Sciatic nerve (tissue), 2 donors: ENCODE measurements at regions of chr7 and their contacts with region 1.

Region 1: GRCh38 chr7:76020031-76020714 is 25.8 kb upstream of the TMEM120A start:
- DNase-seq: peak; percentile 87
- ATAC-seq: peak; percentile 71

Region 2: GRCh38 chr7:75866489-75867389 is 153.4 kb before region 1 on chr7:
- intact Hi-C with region 1: loop called (anchors 5 kb)
- DNase-seq: peak; percentile 69
- ATAC-seq: peak; percentile 92

Region 3: DNA sequence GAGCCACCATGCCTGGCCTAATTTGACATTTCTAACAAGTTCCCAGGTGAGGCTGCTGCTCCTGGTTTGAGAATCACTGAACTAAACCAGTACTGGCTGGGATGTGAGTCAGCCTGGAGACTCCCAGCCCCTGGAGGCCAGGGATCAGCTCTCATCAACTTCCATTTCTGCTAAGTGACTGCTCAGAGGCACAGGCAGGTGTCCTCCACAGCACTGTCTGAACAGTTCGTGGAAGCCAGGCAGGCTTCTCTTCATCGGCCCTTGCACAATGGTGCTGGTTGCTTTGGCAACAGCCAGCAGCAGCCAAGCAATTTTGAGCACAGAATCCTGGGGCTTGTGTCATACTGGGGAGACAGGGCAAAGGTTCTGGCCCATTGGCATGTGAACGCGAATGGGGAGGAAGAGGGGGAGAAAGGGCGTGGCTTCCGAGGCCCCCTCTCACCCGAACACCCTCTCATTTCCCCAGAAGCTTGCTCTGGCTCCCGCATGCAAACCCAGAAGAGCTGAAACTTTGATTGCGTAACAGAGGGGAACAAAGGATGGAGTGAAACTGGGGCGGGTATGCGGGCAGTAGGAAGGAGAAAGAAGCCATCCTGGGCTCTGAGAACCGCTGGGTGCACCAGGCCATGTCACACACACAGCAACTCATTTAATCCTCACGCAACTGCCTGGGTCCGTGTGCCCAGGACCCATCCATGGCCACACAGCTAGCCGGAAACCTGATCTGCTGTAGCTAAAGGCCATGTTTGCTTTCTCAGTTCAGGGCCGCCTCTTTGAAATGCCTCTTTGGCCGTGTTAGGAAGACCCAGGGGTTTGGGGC is 114.2 kb before region 1 on chr7:
- intact Hi-C with region 1: no loop called
- DNase-seq: peak; percentile 87
- ATAC-seq: peak; percentile 96

Region 4: DNA sequence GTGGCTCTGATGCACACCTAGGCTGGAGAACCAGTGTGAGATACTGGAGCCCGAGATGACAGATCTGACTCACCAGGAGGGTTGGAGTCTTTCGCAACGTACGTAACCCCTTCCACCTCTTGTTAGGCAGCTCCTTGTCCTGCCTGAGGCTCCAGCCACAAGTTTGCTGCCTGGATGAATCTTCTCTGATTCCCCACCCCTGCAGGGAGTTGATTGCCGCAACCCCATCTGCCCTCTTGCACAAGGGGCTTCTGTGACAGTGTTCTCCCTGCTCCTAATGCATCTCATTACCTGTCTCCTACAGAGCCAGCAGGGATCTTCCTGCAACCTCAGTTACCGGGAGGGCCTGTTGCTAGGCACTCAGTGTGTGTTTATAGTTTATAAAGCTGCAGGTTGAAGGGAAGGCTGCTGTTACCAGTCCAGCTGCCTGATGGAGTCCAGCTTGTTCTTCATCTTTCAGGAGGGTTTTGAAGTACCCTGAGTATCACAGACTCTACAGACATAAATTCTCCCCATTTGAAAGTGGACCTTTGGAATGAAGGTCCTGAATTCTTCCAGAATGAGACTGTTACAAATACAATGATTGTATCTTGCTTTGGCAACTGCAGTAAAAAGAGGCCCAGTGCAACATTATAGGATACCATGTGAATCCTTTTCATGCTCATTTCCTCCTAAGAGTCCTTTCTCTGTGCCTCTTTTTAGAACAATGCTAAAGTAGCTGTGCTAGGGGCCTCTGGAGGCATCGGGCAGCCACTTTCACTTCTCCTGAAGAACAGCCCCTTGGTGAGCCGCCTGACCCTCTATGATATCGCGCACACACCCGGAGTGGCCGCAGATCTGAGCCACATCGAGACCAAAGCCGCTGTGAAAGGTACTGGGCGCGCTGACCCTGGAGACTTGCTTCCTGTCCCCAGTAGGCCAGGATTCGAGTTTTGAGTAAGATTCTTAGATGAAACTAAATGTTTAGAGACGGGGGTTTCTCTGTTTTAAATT is 34.3 kb after region 1 on chr7:
- intact Hi-C with region 1: no loop called
- DNase-seq: no peak
- ATAC-seq: no peak